ENCODE measurements at regions of chr2 and their contacts with region 1.

Region 1: GRCh38 chr2:136423516-136423996 is 305.6 kb upstream of the CXCR4 start:
- DNase-seq: peak; percentile 54 to 80 (median 72)
- ATAC-seq: peak; percentile 96
- H3K4me3 ChIP-seq: peak overlapping the region; percentile 59
- H3K4me3 Mint-ChIP-seq: peak overlapping the region; percentile 77 to 92 (median 86)
- H3K27ac ChIP-seq: no peak overlapping the region
- H3K27ac Mint-ChIP-seq: peak overlapping the region in 6 of 9 donors; percentile 20 to 79 (median 41)
- H3K4me1 ChIP-seq: peaks cover 4 to 9% of the 10 kb centered on the region in 2 donors
- H3K4me1 Mint-ChIP-seq: peaks cover 12 to 24% (median 15%) of the 10 kb centered on the region in 7 donors
- H3K27me3 ChIP-seq: no peaks in the 10 kb centered on the region
- H3K27me3 Mint-ChIP-seq: peaks cover 22 to 58% (median 35%) of the 10 kb centered on the region in 5 donors

Region 2: GRCh38 chr2:135043345-135043744 is 1380.2 kb before region 1 on chr2:
- CTCF ChIA-PET with region 1: no interaction called
- POLR2A ChIA-PET with region 1: no interaction called
- intact Hi-C with region 1: no loop called
- DNase-seq: peak in 1 of 9 donors; percentile 15
- ATAC-seq: no peak
- H3K4me3 ChIP-seq: no peak overlapping the region
- H3K4me3 Mint-ChIP-seq: no peak overlapping the region
- H3K27ac ChIP-seq: no peak overlapping the region
- H3K27ac Mint-ChIP-seq: no peak overlapping the region
- H3K4me1 ChIP-seq: no peaks in the 10 kb centered on the region
- H3K4me1 Mint-ChIP-seq: peaks cover 0 to 2% (median 0%) of the 10 kb centered on the region in 7 donors
- H3K27me3 ChIP-seq: no peaks in the 10 kb centered on the region
- H3K27me3 Mint-ChIP-seq: peaks cover 0 to 15% (median 8%) of the 10 kb centered on the region in 5 donors

Region 3: DNA sequence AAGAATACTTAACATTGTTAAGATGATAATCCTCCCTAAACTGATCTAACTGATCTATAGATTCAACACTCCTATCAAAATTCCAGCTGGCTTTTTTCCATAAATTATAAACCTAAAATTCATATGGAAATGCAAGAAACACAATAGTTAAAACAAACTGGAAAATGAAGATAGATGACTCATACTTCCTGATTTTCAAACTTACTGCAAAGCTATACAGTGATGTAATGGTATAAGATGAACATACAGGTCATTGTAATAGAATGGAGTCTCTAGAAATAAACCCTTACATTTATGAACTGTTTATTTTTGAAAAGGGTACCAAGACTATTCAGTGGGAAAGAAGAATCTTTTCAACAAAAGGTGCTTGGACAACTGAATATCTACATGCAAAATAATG is 649.6 kb before region 1 on chr2:
- CTCF ChIA-PET with region 1: no interaction called
- POLR2A ChIA-PET with region 1: no interaction called
- intact Hi-C with region 1: no loop called
- DNase-seq: no peak
- ATAC-seq: no peak
- H3K4me3 ChIP-seq: no peak overlapping the region
- H3K4me3 Mint-ChIP-seq: no peak overlapping the region
- H3K27ac ChIP-seq: no peak overlapping the region
- H3K27ac Mint-ChIP-seq: peak overlapping the region in 1 of 9 donors; percentile 31
- H3K4me1 ChIP-seq: no peaks in the 10 kb centered on the region
- H3K4me1 Mint-ChIP-seq: peaks cover 0 to 5% (median 0%) of the 10 kb centered on the region in 7 donors
- H3K27me3 ChIP-seq: no peaks in the 10 kb centered on the region
- H3K27me3 Mint-ChIP-seq: no peaks in the 10 kb centered on the region

Region 4: DNA sequence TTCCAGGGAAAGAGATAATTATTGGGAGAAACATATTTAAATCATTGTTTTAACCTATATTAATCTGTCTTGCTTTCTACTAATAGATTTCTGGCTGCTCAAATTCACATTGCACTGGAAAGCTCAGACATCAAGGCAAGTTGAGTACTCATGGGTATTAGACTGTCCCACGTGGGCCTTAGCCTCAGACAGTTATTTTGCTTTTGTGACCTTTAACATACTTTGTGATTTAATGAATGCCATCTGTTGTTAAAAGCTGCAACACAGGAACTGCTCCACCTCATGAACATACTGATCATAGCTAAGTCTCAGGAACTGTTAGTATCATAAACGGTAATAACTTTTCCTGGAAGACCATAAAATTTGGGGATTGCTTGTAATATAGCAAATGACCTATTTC is 583.8 kb before region 1 on chr2:
- CTCF ChIA-PET with region 1: no interaction called
- POLR2A ChIA-PET with region 1: no interaction called
- intact Hi-C with region 1: no loop called
- DNase-seq: no peak
- ATAC-seq: no peak
- H3K4me3 ChIP-seq: no peak overlapping the region
- H3K4me3 Mint-ChIP-seq: no peak overlapping the region
- H3K27ac ChIP-seq: no peak overlapping the region
- H3K27ac Mint-ChIP-seq: peak overlapping the region in 2 of 9 donors; percentile 7 to 11
- H3K4me1 ChIP-seq: no peaks in the 10 kb centered on the region
- H3K4me1 Mint-ChIP-seq: peaks cover 2 to 41% (median 20%) of the 10 kb centered on the region in 7 donors
- H3K27me3 ChIP-seq: no peaks in the 10 kb centered on the region
- H3K27me3 Mint-ChIP-seq: no peaks in the 10 kb centered on the region

Region 5: DNA sequence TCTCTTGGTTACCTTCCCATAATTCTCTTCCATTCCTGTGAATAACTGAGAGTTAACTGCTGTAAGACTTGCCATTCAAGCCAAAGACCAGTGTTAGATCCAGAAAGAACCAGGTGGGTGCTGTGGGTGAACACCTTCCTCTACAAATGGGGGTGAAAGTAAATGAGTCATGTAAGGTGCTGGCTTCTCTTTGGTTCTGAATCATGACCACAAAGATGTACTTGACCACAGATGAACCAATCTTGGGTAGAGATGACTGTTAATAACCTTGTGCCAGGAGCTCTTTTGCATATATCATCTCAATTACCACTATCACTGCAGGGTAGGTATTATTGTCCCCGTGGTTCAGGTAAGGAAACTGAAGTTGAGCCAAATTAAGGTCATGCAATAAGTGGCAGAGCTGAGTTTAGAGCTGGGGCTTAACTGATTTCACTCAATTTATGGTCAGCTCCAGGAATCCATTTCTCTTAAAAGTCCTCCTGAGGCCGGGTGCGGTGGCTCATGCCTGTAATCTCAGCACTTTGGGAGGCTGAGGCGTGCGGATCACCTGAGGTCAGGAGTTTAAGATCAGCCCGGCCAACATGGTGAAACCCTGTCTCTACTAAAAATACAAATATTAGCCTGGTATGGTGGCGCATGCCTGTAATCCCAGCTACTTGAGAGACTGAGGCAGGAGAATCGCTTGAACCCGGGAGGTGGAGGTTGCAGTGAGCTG is 60.7 kb before region 1 on chr2:
- CTCF ChIA-PET with region 1: no interaction called
- POLR2A ChIA-PET with region 1: no interaction called
- intact Hi-C with region 1: no loop called
- DNase-seq: no peak
- ATAC-seq: peak; percentile 55
- H3K4me3 ChIP-seq: no peak overlapping the region
- H3K4me3 Mint-ChIP-seq: peak overlapping the region in 1 of 10 donors; percentile 2
- H3K27ac ChIP-seq: no peak overlapping the region
- H3K27ac Mint-ChIP-seq: peak overlapping the region in 3 of 9 donors; percentile 1 to 36 (median 10)
- H3K4me1 ChIP-seq: peaks cover 0 to 4% of the 10 kb centered on the region in 2 donors
- H3K4me1 Mint-ChIP-seq: peaks cover 0 to 34% (median 6%) of the 10 kb centered on the region in 7 donors
- H3K27me3 ChIP-seq: no peaks in the 10 kb centered on the region
- H3K27me3 Mint-ChIP-seq: peaks cover 0 to 6% (median 0%) of the 10 kb centered on the region in 5 donors

Region 6: GRCh38 chr2:136738044-136738443 is 314.5 kb after region 1 on chr2:
- CTCF ChIA-PET with region 1: no interaction called
- POLR2A ChIA-PET with region 1: no interaction called
- intact Hi-C with region 1: loop called (anchors 5 kb)
- DNase-seq: no peak
- ATAC-seq: no peak
- H3K4me3 ChIP-seq: no peak overlapping the region
- H3K4me3 Mint-ChIP-seq: no peak overlapping the region
- H3K27ac ChIP-seq: no peak overlapping the region
- H3K27ac Mint-ChIP-seq: no peak overlapping the region
- H3K4me1 ChIP-seq: no peaks in the 10 kb centered on the region
- H3K4me1 Mint-ChIP-seq: peaks cover 0 to 2% (median 0%) of the 10 kb centered on the region in 7 donors
- H3K27me3 ChIP-seq: peaks cover 0 to 5% of the 10 kb centered on the region in 2 donors
- H3K27me3 Mint-ChIP-seq: peaks cover 4 to 28% (median 7%) of the 10 kb centered on the region in 5 donors

Measured in naive thymus-derived CD4-positive, alpha-beta T cell (primary cell).